B cell (primary cell): ENCODE measurements at regions of chr6 and their contacts with region 1.

Region 1: DNA sequence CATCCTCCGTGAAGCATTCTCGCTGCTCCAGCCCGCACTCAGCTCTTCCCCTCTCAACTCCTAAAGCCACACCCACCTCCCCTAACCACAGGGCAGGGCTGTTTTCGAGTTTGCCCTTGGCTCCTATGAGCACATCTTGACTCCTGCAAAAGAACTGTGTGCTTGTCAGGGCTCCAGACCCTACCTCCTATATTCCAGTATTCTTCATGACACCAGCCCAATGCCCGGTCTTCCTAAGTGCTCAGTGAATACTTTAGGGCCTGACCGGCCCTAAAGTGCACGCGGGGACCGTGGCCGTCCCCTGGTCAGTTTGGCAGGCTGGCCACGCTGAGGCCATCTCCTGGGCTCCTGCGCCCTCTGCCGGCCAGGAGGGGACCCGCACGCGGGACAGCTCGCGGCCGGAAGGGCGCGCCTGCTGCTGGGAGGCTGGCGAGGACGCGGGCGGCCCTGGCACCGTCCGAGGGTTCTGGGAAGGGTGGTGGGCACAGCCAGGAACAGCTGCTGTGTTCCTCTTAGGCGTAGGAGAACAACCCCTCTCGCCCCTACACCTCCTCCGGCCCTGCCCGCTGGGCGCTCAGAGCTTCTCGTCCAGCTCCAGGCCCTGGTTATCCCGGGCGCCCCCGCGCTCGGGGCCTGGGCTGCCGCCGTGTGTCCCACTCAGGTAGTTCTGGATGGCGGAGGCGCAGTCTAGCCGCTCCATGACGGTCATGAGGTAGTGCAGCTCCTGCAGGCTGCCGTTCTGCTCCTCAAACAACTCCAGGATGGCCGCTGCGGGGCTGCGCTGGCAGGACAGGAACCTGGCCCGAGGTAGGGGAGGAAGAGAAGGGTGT is 11.0 kb downstream of the UNC5CL start:
- DNase-seq: peak; percentile 85
- ATAC-seq: peak; percentile 89
- H3K4me3 ChIP-seq: peak overlapping the region; percentile 4 to 73 (median 66)
- H3K4me3 Mint-ChIP-seq: peak overlapping the region; percentile 88
- H3K27ac ChIP-seq: peak overlapping the region in 1 of 2 donors; percentile 63
- H3K27ac Mint-ChIP-seq: peak overlapping the region; percentile 55
- H3K4me1 ChIP-seq: peaks cover 20 to 23% of the 10 kb centered on the region in 2 donors
- H3K4me1 Mint-ChIP-seq: peaks cover 24% of the 10 kb centered on the region
- H3K27me3 ChIP-seq: no peaks in the 10 kb centered on the region
- H3K27me3 Mint-ChIP-seq: no peaks in the 10 kb centered on the region
- CTCF ChIP-seq: peak; percentile 100

Region 2: GRCh38 chr6:39361657-39362486 is 1666.1 kb before region 1 on chr6:
- CTCF ChIA-PET with region 1: interaction called, 3 read pairs
- POLR2A ChIA-PET with region 1: no interaction called
- intact Hi-C with region 1: loop called (anchors 5 kb)
- DNase-seq: peak; percentile 67
- ATAC-seq: peak; percentile 63
- H3K4me3 ChIP-seq: no peak overlapping the region
- H3K4me3 Mint-ChIP-seq: no peak overlapping the region
- H3K27ac ChIP-seq: no peak overlapping the region
- H3K27ac Mint-ChIP-seq: no peak overlapping the region
- H3K4me1 ChIP-seq: peaks cover 3% of the 10 kb centered on the region in 2 donors
- H3K4me1 Mint-ChIP-seq: no peaks in the 10 kb centered on the region
- H3K27me3 ChIP-seq: no peaks in the 10 kb centered on the region
- H3K27me3 Mint-ChIP-seq: peaks cover 13% of the 10 kb centered on the region
- CTCF ChIP-seq: peak; percentile 83

Region 3: DNA sequence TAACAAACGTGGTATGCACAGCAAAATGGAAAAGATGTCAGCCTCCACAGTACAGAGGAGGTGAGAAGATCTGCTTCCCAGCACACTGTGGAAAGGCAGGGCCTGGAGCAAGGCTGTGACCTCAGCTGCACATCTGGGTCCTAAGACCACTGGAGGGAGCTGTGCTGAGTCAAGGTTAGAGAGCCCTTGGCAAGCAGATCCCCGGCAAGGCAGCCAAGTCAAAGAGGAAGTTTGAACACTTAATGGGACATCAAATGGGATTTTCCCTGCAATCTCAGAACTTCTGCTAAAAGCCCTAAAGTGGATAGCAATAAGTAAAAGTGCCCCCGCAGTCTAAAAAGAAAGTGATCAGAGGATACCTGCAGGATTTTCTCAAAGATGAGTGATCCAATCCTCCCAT is 28.4 kb before region 1 on chr6:
- CTCF ChIA-PET with region 1: interaction called, 19 read pairs
- POLR2A ChIA-PET with region 1: no interaction called
- intact Hi-C with region 1: no loop called
- DNase-seq: peak; percentile 45
- ATAC-seq: no peak
- H3K4me3 ChIP-seq: no peak overlapping the region
- H3K4me3 Mint-ChIP-seq: no peak overlapping the region
- H3K27ac ChIP-seq: no peak overlapping the region
- H3K27ac Mint-ChIP-seq: no peak overlapping the region
- H3K4me1 ChIP-seq: no peaks in the 10 kb centered on the region
- H3K4me1 Mint-ChIP-seq: no peaks in the 10 kb centered on the region
- H3K27me3 ChIP-seq: peaks cover 0 to 29% (median 7%) of the 10 kb centered on the region in 4 experiments
- H3K27me3 Mint-ChIP-seq: peaks cover 46% of the 10 kb centered on the region
- CTCF ChIP-seq: no peak

Region 4: DNA sequence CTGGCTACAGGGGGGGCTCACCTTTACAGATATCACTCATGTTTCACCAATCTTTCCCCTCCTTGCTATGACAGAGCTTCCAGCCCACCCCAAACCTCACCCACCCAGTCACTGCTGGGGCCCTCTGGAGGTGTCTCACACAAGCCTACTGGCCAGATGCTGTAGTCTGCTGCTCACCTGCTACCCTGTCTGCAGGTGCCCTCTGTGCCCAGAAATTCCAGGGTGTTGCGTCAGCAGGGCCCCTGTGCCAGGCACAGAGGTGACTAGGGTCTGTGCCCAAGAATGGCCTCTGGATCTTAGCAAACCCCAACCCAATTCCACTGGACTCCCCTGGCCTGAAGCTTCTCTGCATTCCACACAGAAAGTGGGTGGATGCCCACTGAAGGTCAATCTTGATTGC is 10.4 kb before region 1 on chr6:
- CTCF ChIA-PET with region 1: interaction called, 24 read pairs
- POLR2A ChIA-PET with region 1: no interaction called
- intact Hi-C with region 1: no loop called
- DNase-seq: no peak
- ATAC-seq: no peak
- H3K4me3 ChIP-seq: no peak overlapping the region
- H3K4me3 Mint-ChIP-seq: no peak overlapping the region
- H3K27ac ChIP-seq: no peak overlapping the region
- H3K27ac Mint-ChIP-seq: no peak overlapping the region
- H3K4me1 ChIP-seq: no peaks in the 10 kb centered on the region
- H3K4me1 Mint-ChIP-seq: no peaks in the 10 kb centered on the region
- H3K27me3 ChIP-seq: peaks cover 0 to 3% (median 0%) of the 10 kb centered on the region in 4 experiments
- H3K27me3 Mint-ChIP-seq: peaks cover 7% of the 10 kb centered on the region
- CTCF ChIP-seq: no peak

Region 5: DNA sequence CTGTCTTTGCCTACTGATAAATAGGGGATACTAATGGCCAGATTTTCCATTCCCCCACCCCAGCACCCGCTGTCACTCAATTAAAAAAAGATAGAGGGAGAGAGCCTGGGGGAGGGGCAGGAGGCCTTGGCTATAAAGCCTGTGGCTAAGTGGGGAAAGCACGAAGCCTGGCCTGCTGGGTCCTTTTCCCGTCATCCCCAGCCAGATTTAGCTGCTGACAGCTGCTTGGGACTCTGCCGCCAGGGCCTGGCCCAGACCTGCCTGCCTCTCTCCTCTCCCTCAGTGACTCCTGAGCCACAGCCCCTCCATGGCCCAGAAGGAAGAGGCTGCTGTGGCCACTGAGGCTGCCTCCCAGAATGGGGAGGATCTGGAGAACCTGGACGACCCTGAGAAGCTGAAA is 25.0 kb after region 1 on chr6 and contains the start of gene APOBEC2:
- CTCF ChIA-PET with region 1: interaction called, 11 read pairs
- POLR2A ChIA-PET with region 1: no interaction called
- intact Hi-C with region 1: no loop called
- DNase-seq: no peak
- ATAC-seq: no peak
- H3K4me3 ChIP-seq: peak within 1 kb of the TSS in 1 of 5 experiments; percentile 1
- H3K4me3 Mint-ChIP-seq: peak within 1 kb of the TSS; percentile 24
- H3K27ac ChIP-seq: peak within 1 kb of the TSS; percentile 35 to 67
- H3K27ac Mint-ChIP-seq: peak within 1 kb of the TSS; percentile 68
- H3K4me1 ChIP-seq: peaks cover 16 to 20% of the 10 kb centered on the region in 2 donors
- H3K4me1 Mint-ChIP-seq: peaks cover 21% of the 10 kb centered on the region
- H3K27me3 ChIP-seq: no peaks in the 10 kb centered on the region
- H3K27me3 Mint-ChIP-seq: no peaks in the 10 kb centered on the region
- CTCF ChIP-seq: no peak
- total RNA-seq, gene APOBEC2: not detected in 2 replicates

Region 6: GRCh38 chr6:41318654-41319565 is 290.9 kb after region 1 on chr6:
- CTCF ChIA-PET with region 1: interaction called, 14 read pairs
- POLR2A ChIA-PET with region 1: no interaction called
- intact Hi-C with region 1: no loop called
- DNase-seq: peak; percentile 92
- ATAC-seq: peak; percentile 99
- H3K4me3 ChIP-seq: peak overlapping the region; percentile 16 to 54 (median 46)
- H3K4me3 Mint-ChIP-seq: peak overlapping the region; percentile 88
- H3K27ac ChIP-seq: peak overlapping the region; percentile 39 to 55
- H3K27ac Mint-ChIP-seq: peak overlapping the region; percentile 91
- H3K4me1 ChIP-seq: peaks cover 47 to 48% of the 10 kb centered on the region in 2 donors
- H3K4me1 Mint-ChIP-seq: peaks cover 34% of the 10 kb centered on the region
- H3K27me3 ChIP-seq: no peaks in the 10 kb centered on the region
- H3K27me3 Mint-ChIP-seq: no peaks in the 10 kb centered on the region
- CTCF ChIP-seq: peak; percentile 100